ENCODE measurements at regions of chr1 and their contacts with region 1.

Region 1: DNA sequence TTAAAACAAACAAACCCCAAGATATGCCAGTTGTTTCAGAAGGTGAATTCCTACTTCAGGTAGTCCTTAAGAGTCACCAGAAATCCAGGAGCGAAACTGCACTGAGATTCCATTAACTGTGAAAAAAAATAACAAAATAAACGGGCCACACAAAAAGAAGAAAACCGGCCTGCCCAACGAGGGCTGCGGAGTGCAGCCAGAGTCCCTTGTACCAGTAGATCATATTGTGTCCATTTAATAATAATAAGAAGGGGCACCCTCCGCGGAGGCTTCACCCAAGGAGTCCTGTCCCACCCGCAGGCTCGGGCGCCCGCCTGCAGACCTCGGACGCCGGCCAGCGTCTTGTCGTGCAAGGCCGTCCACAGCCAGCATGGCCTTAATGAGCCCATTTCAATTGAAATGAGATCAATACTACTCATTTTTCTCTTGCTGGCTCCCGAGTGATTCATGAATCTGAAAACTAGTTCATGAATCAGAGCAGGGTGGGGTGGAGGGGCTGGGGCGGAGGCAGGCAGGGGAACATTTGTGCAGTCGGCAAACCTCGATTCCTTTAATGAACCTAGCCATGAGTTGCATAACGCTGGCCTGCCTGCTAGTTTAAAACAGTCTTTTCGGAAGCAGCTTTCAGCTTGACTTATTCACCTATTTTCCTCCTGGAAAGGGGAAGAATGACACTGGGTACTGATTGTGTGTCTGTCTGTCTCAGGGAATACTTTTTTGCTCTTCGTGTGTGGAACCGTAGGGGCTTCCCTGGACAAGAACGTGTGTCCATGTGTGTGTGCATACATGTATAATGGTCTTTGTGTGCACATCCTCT is 113.1 kb upstream of the IRF2BP2 start:
- DNase-seq: no peak
- ATAC-seq: no peak
- H3K4me3 Mint-ChIP-seq: peak overlapping the region; percentile 76
- H3K27ac Mint-ChIP-seq: peak overlapping the region; percentile 94
- H3K4me1 Mint-ChIP-seq: peaks cover 54% of the 10 kb centered on the region
- H3K27me3 Mint-ChIP-seq: no peaks in the 10 kb centered on the region

Region 2: GRCh38 chr1:234599617-234600417 is 123.3 kb before region 1 on chr1:
- POLR2A ChIA-PET with region 1: interaction called, 11 read pairs
- DNase-seq: peak; percentile 83
- ATAC-seq: peak; percentile 71
- H3K4me3 Mint-ChIP-seq: peak overlapping the region; percentile 88
- H3K27ac Mint-ChIP-seq: peak overlapping the region; percentile 93
- H3K4me1 Mint-ChIP-seq: peaks cover 46% of the 10 kb centered on the region
- H3K27me3 Mint-ChIP-seq: no peaks in the 10 kb centered on the region

Region 3: DNA sequence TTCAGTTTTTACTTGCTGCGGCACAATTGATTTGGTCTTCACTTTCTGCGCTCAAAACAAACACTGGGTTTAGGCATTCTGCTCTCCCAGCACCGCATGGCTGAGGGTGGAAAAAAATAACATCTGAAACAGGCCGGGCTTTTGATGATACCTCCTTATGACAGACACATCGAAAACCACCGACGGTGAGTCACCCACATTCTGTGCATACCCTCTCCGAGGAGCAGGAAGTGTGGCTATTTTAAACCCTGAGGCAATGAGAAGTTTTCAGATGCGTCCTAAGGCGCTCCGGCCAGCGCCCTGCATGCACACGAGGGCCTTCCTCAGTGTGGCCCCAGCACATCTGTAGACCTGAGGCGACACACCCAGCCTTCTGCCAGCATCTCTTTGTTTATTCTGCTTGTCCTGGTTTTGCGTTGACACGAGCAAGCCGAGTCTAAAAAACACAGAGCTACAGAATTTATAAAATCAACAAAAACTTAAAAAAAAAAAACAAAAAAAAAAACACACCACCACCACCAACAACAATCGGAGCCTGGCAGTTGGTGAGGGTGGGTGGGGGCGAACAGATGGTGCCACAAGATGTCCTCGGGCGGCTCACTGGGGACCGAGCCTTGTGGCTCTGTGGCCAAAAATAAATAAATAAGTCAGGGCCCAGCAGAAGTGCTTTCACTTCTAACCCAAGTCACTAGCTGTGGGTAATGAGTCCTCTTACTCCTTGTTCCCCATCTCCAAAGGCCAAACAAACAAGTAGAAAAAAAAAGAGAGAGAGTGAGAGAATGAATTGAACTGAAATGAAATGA is 49.4 kb after region 1 on chr1:
- POLR2A ChIA-PET with region 1: interaction called, 11 read pairs
- DNase-seq: peak; percentile 71
- ATAC-seq: peak; percentile 89
- H3K4me3 Mint-ChIP-seq: peak overlapping the region; percentile 72
- H3K27ac Mint-ChIP-seq: peak overlapping the region; percentile 92
- H3K4me1 Mint-ChIP-seq: peaks cover 49% of the 10 kb centered on the region
- H3K27me3 Mint-ChIP-seq: no peaks in the 10 kb centered on the region

Region 4: DNA sequence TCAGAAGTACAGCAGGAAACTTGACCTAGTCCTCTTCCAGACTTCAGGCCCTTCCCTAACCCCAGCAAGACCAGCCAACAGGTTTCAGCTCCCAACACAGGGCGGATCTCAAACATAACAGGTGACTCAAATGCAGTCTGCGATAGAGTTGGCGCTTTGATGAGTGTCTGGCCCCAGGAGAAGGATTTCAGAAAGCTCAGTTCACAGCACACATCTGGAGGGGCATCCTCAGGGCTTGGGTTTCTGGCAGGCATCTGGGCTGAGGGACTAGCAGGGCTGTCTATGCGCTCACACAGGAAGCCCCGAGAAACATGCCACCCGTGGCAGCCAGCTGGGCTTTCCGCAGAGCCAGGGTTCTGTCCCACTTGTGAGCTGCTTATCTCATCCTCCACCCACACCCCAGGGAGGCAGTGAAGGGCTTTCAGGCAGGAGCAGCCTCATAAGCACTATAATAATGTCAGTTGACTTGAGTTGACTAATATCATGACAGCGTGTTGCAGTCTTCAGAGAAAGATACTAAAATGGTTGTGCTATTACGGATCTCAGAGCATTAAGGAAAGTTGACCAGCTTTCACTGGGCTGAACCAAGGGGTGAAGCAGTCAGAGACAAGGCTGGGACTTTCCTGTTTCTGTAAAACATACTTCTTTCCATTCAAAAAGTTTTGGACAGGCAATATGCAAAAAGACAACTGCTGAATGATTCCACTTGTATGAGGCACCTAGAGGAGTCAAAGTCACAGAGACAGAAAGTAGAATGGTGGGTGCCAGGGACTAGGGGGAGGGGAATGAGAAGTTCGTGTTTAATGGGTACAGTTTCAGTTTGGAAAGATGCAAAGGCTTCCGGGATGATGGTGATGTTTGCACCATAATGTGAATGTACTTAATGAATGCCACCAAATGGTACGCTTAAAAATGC is 119.9 kb after region 1 on chr1:
- POLR2A ChIA-PET with region 1: interaction called, 33 read pairs
- DNase-seq: peak; percentile 65
- ATAC-seq: peak; percentile 64
- H3K4me3 Mint-ChIP-seq: peak overlapping the region; percentile 72
- H3K27ac Mint-ChIP-seq: peak overlapping the region; percentile 93
- H3K4me1 Mint-ChIP-seq: peaks cover 72% of the 10 kb centered on the region
- H3K27me3 Mint-ChIP-seq: no peaks in the 10 kb centered on the region

Region 5: DNA sequence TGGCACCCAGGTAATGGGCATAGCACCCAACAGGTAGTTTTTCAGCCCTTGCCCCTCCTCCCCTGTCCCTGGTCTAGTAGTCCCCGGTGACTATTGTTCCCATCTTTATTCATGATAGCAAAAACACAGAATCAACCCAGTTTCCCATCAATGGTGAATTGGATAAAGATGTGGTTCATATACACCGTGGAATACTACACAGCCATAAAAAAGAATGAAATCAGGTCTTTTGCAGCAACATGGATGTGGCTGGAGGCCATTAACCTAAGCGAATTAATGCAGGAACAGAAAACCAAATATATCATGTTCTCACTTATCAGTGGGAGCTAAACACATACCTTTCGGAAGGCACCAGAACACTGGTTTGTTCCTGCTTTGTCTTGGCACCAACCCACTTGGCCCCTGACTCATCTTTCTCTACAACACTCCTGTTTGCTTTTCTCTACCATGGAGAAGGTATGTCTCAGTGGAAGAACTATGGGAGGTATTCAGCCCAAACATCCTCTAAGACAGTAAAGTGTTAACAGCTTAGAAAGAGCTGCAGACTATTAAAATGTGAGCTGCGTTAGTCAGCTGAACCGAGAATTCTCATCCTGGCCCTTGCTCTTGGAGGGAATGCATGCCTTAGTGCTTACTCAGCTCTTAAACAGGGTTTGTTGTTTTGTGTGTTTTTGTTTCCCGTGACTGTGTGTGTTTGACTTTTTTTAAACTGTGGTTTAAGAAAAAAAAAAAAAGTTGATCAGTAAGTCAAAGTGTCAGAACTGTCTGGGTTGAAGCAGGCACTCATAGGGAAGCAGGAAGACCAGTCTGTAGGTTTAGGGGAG is 202.5 kb after region 1 on chr1:
- POLR2A ChIA-PET with region 1: interaction called, 15 read pairs
- DNase-seq: no peak
- ATAC-seq: no peak
- H3K4me3 Mint-ChIP-seq: peak overlapping the region; percentile 68
- H3K27ac Mint-ChIP-seq: peak overlapping the region; percentile 95
- H3K4me1 Mint-ChIP-seq: peaks cover 47% of the 10 kb centered on the region
- H3K27me3 Mint-ChIP-seq: no peaks in the 10 kb centered on the region

Region 6: DNA sequence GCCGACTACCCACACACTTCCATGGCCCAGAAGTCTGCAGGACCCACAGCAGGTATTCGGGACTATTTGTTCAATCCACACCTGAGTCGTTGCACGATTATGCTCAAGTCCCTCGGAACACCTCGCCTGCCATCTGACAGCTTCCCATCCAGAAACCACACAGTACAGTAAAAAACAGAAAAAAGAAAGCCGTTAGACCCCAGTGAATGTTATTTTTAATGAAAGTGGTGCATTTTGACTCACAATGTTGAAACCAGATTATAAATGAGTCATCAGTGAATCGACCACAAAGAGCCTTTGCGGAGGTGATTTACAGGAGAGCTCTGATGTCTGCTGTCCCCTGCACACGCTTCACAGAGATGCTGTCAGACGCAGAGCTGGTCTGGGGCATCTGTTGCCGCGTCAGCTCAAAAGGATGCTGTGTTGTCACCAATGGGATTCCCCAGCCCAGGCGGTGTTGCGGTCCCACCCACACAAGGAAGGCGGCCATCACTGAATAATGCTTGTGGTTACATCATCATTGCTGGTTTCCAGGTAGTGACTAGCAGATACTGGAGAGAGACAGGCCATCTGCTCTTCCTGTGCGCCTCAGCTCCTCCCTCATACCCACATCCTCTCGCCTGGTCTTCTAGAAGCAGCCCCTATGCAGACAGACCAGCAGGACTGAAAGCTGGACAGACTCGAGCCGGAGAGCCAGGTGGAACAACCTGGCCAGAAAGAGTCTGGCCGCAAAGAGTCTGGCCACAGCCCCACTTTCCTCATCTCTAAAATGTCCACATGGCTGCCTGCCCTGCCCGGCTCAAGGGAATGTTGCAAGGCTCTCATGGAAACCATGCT is 288.7 kb after region 1 on chr1:
- POLR2A ChIA-PET with region 1: interaction called, 18 read pairs
- DNase-seq: peak; percentile 92
- ATAC-seq: peak; percentile 95
- H3K4me3 Mint-ChIP-seq: peak overlapping the region; percentile 64
- H3K27ac Mint-ChIP-seq: peak overlapping the region; percentile 93
- H3K4me1 Mint-ChIP-seq: peaks cover 69% of the 10 kb centered on the region
- H3K27me3 Mint-ChIP-seq: no peaks in the 10 kb centered on the region

Region 7: DNA sequence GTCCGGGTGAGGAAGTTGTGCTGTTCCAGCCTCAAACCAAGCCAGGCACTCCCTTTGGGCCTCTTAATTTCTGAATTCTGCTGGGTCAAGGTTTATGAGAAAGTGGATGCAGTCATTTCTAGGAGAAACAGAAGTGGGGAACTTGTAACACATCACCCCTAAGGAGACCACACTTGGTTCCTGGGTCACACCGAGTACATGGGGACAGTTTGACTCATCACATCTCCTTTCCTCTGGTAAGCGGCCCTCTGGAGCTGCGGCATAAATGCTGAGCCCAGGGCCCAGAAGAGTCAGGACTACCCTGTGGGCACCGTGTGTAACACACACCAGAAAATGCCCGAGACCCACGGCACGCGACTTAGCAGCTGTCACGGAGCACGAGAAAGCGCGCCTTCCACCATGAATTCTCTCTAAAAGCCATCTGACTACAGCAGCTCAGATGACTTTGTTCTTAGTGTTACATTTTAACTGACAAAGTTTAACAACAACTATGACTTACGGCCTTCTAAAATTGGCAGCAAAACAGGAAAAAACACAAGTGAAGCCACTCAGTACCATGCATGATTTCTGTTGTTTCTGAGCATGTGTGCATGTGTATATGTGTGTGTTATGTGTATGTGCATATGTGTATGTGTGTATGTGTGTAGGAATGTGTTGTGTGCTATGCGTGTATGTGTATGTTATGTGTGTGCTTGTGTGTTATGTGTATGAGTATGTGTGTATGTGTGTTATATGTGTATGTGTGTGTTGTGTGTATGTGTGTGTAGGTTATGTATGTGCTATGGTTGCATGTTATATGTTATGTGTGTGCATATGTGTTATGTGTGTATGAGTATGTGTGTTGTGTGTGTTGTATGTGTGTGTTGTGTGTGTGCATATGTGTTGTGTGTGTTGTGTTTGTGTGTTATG is 354.7 kb after region 1 on chr1:
- POLR2A ChIA-PET with region 1: interaction called, 17 read pairs
- DNase-seq: no peak
- ATAC-seq: peak; percentile 56
- H3K4me3 Mint-ChIP-seq: peak overlapping the region; percentile 4
- H3K27ac Mint-ChIP-seq: peak overlapping the region; percentile 66
- H3K4me1 Mint-ChIP-seq: peaks cover 30% of the 10 kb centered on the region
- H3K27me3 Mint-ChIP-seq: no peaks in the 10 kb centered on the region